ENCODE measurements at regions of chrX and their contacts with region 1.

Region 1: GRCh38 chrX:150365051-150365989 is 2.2 kb downstream of the MAMLD1 start:
- DNase-seq: peak; percentile 78 to 87 (median 85)
- H3K4me3 ChIP-seq: peak overlapping the region; percentile 52
- H3K27ac ChIP-seq: peak overlapping the region; percentile 75 to 88
- H3K4me1 ChIP-seq: peaks cover 3% of the 10 kb centered on the region
- H3K27me3 ChIP-seq: no peaks in the 10 kb centered on the region
- CTCF ChIP-seq: peak; percentile 30 to 73 (median 72)
- EP300 ChIP-seq: no peak
- POLR2A ChIP-seq: peak; percentile 47

Region 2: GRCh38 chrX:149950681-149951080 is 414.6 kb before region 1 on chrX:
- intact Hi-C with region 1: loop called in 1 of 4 experiments (anchors 10 kb)
- DNase-seq: no peak
- H3K4me3 ChIP-seq: no peak overlapping the region
- H3K27ac ChIP-seq: no peak overlapping the region
- H3K4me1 ChIP-seq: no peaks in the 10 kb centered on the region
- H3K27me3 ChIP-seq: no peaks in the 10 kb centered on the region
- CTCF ChIP-seq: no peak
- EP300 ChIP-seq: no peak
- POLR2A ChIP-seq: no peak

Region 3: GRCh38 chrX:150478496-150479492 is 113.5 kb after region 1 on chrX:
- intact Hi-C with region 1: loop called in 1 of 4 experiments (anchors 5 kb)
- DNase-seq: no peak
- H3K4me3 ChIP-seq: no peak overlapping the region
- H3K27ac ChIP-seq: peak overlapping the region in 1 of 2 donors; percentile 44
- H3K4me1 ChIP-seq: peaks cover 11% of the 10 kb centered on the region
- H3K27me3 ChIP-seq: no peaks in the 10 kb centered on the region
- CTCF ChIP-seq: no peak
- EP300 ChIP-seq: no peak
- POLR2A ChIP-seq: no peak

Region 4: GRCh38 chrX:150575416-150575808 is 210.1 kb after region 1 on chrX:
- intact Hi-C with region 1: loop called in 1 of 4 experiments (anchors 10 kb)
- DNase-seq: no peak
- H3K4me3 ChIP-seq: no peak overlapping the region
- H3K27ac ChIP-seq: no peak overlapping the region
- H3K4me1 ChIP-seq: peaks cover 2% of the 10 kb centered on the region
- H3K27me3 ChIP-seq: no peaks in the 10 kb centered on the region
- CTCF ChIP-seq: no peak
- EP300 ChIP-seq: no peak
- POLR2A ChIP-seq: no peak

Region 5: GRCh38 chrX:150704030-150704613 is 338.8 kb after region 1 on chrX:
- intact Hi-C with region 1: loop called in 1 of 4 experiments (anchors 10 kb)
- DNase-seq: no peak
- H3K4me3 ChIP-seq: no peak overlapping the region
- H3K27ac ChIP-seq: no peak overlapping the region
- H3K4me1 ChIP-seq: peaks cover 1% of the 10 kb centered on the region
- H3K27me3 ChIP-seq: no peaks in the 10 kb centered on the region
- CTCF ChIP-seq: no peak
- EP300 ChIP-seq: no peak
- POLR2A ChIP-seq: no peak

Measured in ovary (tissue), 10 donors.